G401 (cell line): ENCODE measurements at regions of chr22 and their contacts with region 1.

Region 1: DNA sequence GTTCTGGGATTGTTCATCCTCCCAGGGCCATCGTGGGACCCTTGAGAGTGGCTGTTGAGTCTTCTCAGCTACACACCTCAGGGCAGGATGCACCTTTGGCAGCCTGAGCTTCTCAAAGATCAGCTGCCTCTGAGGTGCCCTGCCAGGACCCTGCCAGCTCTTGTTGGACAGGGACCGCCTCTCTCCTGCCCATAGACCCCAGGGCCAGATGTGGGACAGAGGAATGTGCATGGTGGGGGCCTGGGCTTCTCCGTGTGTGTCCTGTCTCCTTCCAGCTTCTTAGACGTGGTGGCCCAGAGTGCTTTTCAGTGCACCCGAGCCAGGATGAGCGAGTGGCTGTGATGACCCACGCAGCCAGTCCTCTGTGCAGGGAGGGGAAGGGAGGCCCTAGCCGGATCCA is 5.9 kb upstream of the TRMU start:
- DNase-seq: no peak

Region 2: DNA sequence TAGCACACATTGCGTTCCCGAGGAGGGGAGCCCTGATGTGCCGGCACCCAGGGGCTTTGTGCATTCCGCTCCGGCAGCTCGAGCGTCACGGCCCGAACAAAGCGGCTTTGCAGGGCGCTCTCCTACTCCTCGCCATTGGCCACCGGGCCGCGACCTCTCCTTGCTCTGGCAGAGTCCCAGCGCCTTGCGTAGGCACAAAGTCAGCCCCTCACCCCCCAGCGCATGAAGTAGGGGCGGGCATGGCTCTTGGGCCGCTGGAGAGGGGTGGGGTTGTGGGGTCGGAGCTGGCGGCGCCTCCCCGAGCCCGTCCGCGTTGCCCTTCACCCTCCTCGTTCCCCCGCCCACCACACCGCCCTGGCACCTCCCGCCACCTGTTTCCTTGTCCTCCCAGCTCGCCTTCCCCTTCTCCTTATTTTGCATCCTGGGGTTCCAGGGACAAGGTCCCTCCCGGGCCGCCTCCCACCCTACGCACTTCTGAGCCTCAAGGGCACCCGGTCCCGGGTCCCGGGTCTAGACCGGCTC is 180.0 kb before region 1 on chr22:
- in situ Hi-C with region 1: loop called (anchors 5 kb)
- DNase-seq: peak; percentile 11